Activated CD8-positive, alpha-beta T cell treated with anti-CD3 and anti-CD28 coated beads for 36 hours (primary cell): ENCODE measurements at regions of chr3 and their contacts with region 1.

Region 1: DNA sequence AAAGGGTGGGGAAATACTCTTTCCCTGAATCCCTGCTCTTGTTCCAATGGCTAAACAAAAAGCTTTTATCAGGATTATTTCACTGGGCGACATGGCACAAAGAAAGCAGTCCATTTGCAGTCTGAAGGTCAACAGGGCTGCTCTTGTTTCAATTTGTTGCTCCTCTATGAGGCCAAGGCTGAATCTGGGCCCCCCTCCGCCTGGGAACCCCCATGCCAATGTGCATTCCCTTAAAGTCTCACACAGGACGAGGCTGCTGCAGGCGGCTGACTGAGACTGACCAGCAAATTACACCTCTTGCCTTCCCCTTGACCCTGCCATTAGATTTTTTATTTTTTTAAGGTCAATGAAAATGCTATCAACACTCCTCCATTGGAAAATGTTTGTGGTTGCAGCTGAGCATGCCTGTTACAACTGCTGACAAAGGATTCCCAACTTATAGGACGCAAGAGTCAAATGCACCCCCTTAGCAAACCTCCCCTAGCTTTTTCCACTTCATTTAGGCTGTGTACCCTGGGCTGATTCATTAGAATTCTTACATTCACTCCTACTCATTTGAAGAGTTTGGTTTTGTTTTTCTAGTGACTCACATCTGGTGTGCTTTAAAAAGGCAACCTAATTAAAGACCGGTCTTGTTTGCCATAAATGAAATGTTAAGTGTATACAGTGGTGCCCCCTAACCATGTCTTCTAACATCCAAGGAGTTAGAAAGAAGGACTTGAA is 60.8 kb upstream of the ARHGEF3 start:
- DNase-seq: peak; percentile 62
- ATAC-seq: peak; percentile 75
- H3K4me3 Mint-ChIP-seq: peak overlapping the region; percentile 28
- H3K27ac Mint-ChIP-seq: peak overlapping the region; percentile 87
- H3K4me1 Mint-ChIP-seq: peaks cover 75% of the 10 kb centered on the region
- H3K27me3 Mint-ChIP-seq: no peaks in the 10 kb centered on the region
- CTCF ChIP-seq: no peak

Region 2: GRCh38 chr3:56923521-56924224 is 61.2 kb after region 1 on chr3:
- CTCF ChIA-PET with region 1: interaction called, 3 read pairs
- POLR2A ChIA-PET with region 1: interaction called, 21 read pairs
- intact Hi-C with region 1: loop called (anchors 5 kb)
- DNase-seq: no peak
- ATAC-seq: peak; percentile 14
- H3K4me3 Mint-ChIP-seq: peak overlapping the region; percentile 40
- H3K27ac Mint-ChIP-seq: peak overlapping the region; percentile 77
- H3K4me1 Mint-ChIP-seq: peaks cover 81% of the 10 kb centered on the region
- H3K27me3 Mint-ChIP-seq: no peaks in the 10 kb centered on the region
- CTCF ChIP-seq: no peak